WTC11 (cell line): ENCODE measurements at regions of chr6 and their contacts with region 1.

Region 1: GRCh38 chr6:52284460-52285176 is at the start of gene MCM3:
- DNase-seq: peak; percentile 97
- ATAC-seq: peak; percentile 98
- H3K4me3 Mint-ChIP-seq: no peak within 1 kb of the TSS
- H3K27ac Mint-ChIP-seq: peak within 1 kb of the TSS; percentile 93
- H3K4me1 Mint-ChIP-seq: peaks cover 19% of the 10 kb centered on the region
- H3K27me3 Mint-ChIP-seq: no peaks in the 10 kb centered on the region
- CTCF ChIP-seq: no peak
- total RNA-seq, gene MCM3: 252 to 276 TPM (median 253 TPM) in 3 replicates

Region 2: DNA sequence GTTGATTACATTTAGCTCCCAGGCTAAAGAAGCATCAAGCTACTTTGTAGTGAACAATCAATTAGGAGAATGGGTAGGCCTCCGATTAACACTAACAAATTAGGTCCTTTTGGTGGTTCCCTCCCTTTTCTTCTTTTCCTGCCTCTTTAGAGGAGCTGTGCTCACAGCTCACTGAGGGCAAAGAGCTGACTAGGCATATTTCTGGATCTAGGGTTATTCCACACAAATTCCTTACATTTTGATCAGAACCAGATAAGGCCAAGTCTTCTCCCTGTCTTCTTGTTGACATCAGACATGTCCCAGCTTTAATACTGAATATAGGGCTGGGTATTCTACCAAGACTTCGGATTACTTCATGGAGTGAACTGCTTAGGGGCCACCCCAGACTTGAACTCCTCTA is 316.4 kb before region 1 on chr6:
- CTCF ChIA-PET with region 1: no interaction called
- POLR2A ChIA-PET with region 1: no interaction called
- DNase-seq: no peak
- ATAC-seq: no peak
- H3K4me3 Mint-ChIP-seq: no peak overlapping the region
- H3K27ac Mint-ChIP-seq: no peak overlapping the region
- H3K4me1 Mint-ChIP-seq: no peaks in the 10 kb centered on the region
- H3K27me3 Mint-ChIP-seq: no peaks in the 10 kb centered on the region; the same call in 1 of the 2 replicates
- CTCF ChIP-seq: no peak

Region 3: DNA sequence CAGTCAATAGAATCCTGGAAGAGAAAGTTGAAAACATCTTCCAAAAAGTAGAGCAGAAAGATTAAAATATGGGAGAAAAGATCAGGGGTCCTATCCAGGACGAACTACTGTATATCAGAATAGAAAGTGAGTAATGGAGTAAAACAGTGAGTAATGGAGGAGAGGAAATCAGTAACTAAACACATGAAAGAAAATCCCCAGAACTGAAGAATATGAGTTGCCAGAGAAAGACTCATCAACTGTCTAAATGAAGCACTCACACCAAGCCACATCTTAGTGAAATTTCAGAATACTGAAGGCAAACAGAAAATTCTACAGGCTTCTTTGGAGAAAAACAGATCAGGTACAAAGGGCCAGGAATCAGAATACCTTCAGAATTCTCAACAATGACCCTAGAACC is 83.6 kb before region 1 on chr6:
- CTCF ChIA-PET with region 1: no interaction called
- POLR2A ChIA-PET with region 1: no interaction called
- DNase-seq: no peak
- ATAC-seq: no peak
- H3K4me3 Mint-ChIP-seq: no peak overlapping the region
- H3K27ac Mint-ChIP-seq: no peak overlapping the region
- H3K4me1 Mint-ChIP-seq: no peaks in the 10 kb centered on the region
- H3K27me3 Mint-ChIP-seq: no peaks in the 10 kb centered on the region; the same call in 1 of the 2 replicates
- CTCF ChIP-seq: no peak

Region 4: DNA sequence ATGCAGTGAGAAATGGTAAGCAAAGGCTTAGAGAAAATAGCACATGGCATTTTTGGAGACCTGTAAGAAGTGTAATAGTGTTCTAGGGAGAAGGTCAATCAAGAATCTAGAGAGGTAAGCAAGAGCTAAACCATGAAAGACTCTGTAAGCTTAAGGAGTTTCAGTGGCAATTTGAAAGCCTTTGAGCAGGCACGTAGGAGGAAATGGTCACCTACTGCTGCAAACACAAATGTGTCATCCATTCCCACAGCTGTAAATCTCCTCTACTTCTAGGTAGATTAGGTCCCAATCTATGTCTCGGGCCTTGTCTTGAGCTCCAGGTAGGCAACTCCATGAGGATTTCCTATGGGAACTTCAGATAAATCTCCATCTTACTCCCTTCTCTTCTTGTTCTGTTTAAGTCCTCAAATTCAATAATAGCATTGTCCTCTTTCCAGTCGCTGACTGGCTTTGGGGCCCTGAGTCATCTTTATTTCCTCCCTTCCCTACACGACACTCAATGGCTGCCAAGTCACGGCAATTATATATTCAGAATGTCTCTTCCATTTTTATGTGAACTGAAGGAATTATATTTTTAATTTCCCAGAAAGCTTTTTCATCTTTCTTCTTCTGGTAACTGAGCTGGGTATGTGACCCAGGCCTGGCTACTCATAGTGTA is 53.1 kb after region 1 on chr6:
- CTCF ChIA-PET with region 1: no interaction called
- POLR2A ChIA-PET with region 1: no interaction called
- DNase-seq: no peak
- ATAC-seq: no peak
- H3K4me3 Mint-ChIP-seq: no peak overlapping the region
- H3K27ac Mint-ChIP-seq: no peak overlapping the region
- H3K4me1 Mint-ChIP-seq: no peaks in the 10 kb centered on the region
- H3K27me3 Mint-ChIP-seq: no peaks in the 10 kb centered on the region
- CTCF ChIP-seq: no peak

Region 5: DNA sequence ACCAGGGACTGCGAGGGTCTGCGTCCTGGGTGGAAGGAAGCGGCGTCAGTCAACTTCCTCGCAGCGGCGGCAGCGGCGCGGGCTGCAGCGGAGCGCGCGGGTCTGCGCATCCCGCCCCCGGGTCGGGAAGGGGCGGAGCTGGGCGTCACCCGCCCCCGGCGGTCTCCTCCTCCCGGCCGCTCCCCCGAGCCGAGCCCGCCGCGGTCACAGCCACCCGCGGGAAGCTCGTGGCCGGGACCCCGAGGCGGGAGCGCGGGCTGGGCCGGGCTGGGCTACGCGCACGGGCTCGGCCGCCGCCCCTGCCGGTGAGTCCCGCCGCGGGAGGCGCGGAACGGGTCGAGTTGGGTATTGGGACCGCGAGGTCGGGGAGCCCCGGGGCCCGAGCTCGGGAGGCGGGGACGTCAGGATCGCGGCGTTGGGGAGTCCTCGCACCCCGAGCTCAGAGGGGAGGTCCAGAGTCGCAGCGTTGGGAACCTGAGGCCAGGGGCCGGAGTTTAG is 77.4 kb after region 1 on chr6 and contains the start of gene PAQR8:
- CTCF ChIA-PET with region 1: interaction called, 21 read pairs
- POLR2A ChIA-PET with region 1: interaction called, 13 read pairs
- DNase-seq: peak; percentile 56
- ATAC-seq: peak; percentile 71
- H3K4me3 Mint-ChIP-seq: peak within 1 kb of the TSS; percentile 94
- H3K27ac Mint-ChIP-seq: peak within 1 kb of the TSS; percentile 6; the same call in 1 of the 2 replicates
- H3K4me1 Mint-ChIP-seq: peaks cover 34% of the 10 kb centered on the region
- H3K27me3 Mint-ChIP-seq: peaks cover 32% of the 10 kb centered on the region
- CTCF ChIP-seq: no peak
- total RNA-seq, gene PAQR8: 11.1 to 12.5 TPM (median 11.7 TPM) in 3 replicates

Region 6: GRCh38 chr6:52399511-52400312 is 115.1 kb after region 1 on chr6:
- CTCF ChIA-PET with region 1: interaction called, 30 read pairs
- POLR2A ChIA-PET with region 1: interaction called, 6 read pairs
- DNase-seq: peak; percentile 40
- ATAC-seq: peak; percentile 88
- H3K4me3 Mint-ChIP-seq: no peak overlapping the region
- H3K27ac Mint-ChIP-seq: peak overlapping the region; percentile 55; the same call in 1 of the 2 replicates
- H3K4me1 Mint-ChIP-seq: peaks cover 27% of the 10 kb centered on the region
- H3K27me3 Mint-ChIP-seq: no peaks in the 10 kb centered on the region
- CTCF ChIP-seq: peak; percentile 55